Prostate gland (tissue), 2 donors: ENCODE measurements at regions of chr11 and their contacts with region 1.

Region 1: GRCh38 chr11:114439229-114440120 is at the start of gene REXO2:
- DNase-seq: peak; percentile 98
- H3K4me3 ChIP-seq: peak within 1 kb of the TSS; percentile 84 to 89
- H3K27ac ChIP-seq: peak within 1 kb of the TSS; percentile 85 to 86
- H3K4me1 ChIP-seq: no peaks in the 10 kb centered on the region
- H3K27me3 ChIP-seq: no peaks in the 10 kb centered on the region
- CTCF ChIP-seq: peak in 3 of 4 experiments; percentile 33 to 47 (median 41)
- POLR2A ChIP-seq: peak; percentile 89
- total RNA-seq, gene REXO2: 90.6 to 151 TPM

Region 2: DNA sequence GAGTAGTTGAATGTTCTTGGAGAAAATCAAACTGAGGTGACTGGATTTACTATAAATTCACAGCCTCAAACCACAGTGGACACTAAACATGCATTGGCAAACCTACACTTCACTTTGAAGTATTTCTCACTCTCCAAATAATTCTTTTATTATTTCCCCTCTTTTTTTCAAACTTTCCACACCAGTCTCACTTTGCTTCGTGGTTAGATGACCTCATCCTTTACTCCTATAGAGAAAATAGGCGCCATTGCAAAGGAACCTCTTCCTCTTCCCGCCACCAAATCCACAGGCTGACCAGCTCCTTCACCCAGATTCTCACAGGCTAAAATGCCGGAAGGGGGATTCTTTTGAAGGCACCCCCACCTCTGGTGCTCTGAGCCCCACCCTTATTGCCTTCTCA is 431.1 kb before region 1 on chr11:
- intact Hi-C with region 1: no loop called
- DNase-seq: no peak
- H3K4me3 ChIP-seq: no peak overlapping the region
- H3K27ac ChIP-seq: no peak overlapping the region
- H3K4me1 ChIP-seq: no peaks in the 10 kb centered on the region
- H3K27me3 ChIP-seq: no peaks in the 10 kb centered on the region
- CTCF ChIP-seq: no peak
- POLR2A ChIP-seq: no peak

Region 3: GRCh38 chr11:114110952-114111947 is 328.2 kb before region 1 on chr11:
- intact Hi-C with region 1: no loop called
- DNase-seq: peak; percentile 32
- H3K4me3 ChIP-seq: no peak overlapping the region
- H3K27ac ChIP-seq: peak overlapping the region; percentile 58 to 69
- H3K4me1 ChIP-seq: peaks cover 26% of the 10 kb centered on the region
- H3K27me3 ChIP-seq: no peaks in the 10 kb centered on the region
- CTCF ChIP-seq: no peak
- POLR2A ChIP-seq: no peak

Region 4: GRCh38 chr11:114400217-114400914 is 39.1 kb before region 1 on chr11 and contains the starts of genes C11orf71 and RBM7:
- intact Hi-C with region 1: loop called (anchors 5 kb)
- DNase-seq: peak; percentile 96
- H3K4me3 ChIP-seq: peak within 1 kb of the TSS; percentile 55 to 84
- H3K27ac ChIP-seq: peak within 1 kb of the TSS; percentile 92 to 93
- H3K4me1 ChIP-seq: no peaks in the 10 kb centered on the region
- H3K27me3 ChIP-seq: no peaks in the 10 kb centered on the region
- CTCF ChIP-seq: peak in 1 of 4 experiments; percentile 21
- POLR2A ChIP-seq: peak; percentile 94
- total RNA-seq, gene C11orf71: 14.4 to 15.3 TPM
- total RNA-seq, gene RBM7: 23.7 to 27.3 TPM

Region 5: DNA sequence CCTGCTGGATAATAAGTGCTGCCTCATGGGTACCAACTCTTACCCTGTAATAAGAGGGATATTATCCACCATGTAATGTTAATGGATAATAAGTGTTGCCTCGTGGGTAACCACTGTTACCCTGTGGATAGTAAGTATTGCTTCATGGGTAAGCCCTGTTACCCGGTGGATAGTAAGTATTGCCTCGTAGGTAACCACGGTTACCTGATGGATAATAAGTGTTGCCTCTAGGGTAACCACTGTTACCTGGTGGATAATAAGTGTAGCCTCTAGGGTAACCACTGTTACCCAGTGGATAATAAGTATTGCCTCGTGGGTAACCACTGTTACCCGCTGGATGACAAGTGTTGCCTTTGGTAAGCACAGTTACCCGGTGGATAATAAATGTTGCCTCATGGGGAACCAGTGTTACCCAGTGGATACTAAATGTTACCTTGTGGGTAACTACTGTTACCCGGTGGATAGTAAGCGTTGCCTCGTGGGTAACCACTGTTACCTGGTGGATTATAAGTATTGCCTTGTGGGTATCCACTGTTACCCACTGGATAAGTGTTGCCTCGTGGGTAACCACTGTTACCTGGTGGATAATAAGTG is 174.7 kb after region 1 on chr11:
- intact Hi-C with region 1: no loop called
- DNase-seq: no peak
- H3K4me3 ChIP-seq: no peak overlapping the region
- H3K27ac ChIP-seq: no peak overlapping the region
- H3K4me1 ChIP-seq: no peaks in the 10 kb centered on the region
- H3K27me3 ChIP-seq: no peaks in the 10 kb centered on the region
- CTCF ChIP-seq: peak in 1 of 4 experiments; percentile 5
- POLR2A ChIP-seq: no peak